ENCODE measurements at regions of chr11 and their contacts with region 1.

Region 1: DNA sequence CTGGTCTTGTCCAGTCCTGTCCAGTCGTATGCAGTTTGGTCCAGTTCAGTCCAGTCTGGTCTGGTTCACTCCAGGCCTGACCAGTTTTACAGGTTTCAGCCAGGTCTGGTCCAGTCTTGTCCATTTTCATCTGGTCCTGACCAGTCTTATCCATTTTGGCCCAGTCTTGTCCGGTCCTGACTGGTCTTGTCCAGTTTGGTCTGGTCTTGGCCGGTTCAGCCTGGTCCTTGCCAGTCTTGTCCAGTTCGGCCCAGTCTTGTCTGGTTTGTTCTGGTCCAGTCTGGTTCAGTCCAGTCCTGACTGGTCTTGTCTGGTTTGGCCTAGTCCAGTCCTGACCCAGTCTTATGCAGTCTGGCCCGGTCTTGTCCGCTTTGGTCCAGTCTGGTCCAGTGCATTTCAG is 380.2 kb downstream of the OR4C45 start:
- DNase-seq: no peak
- ATAC-seq: no peak
- H3K4me3 ChIP-seq: no peak overlapping the region
- H3K27ac ChIP-seq: no peak overlapping the region
- H3K4me1 ChIP-seq: no peaks in the 10 kb centered on the region
- H3K27me3 ChIP-seq: no peaks in the 10 kb centered on the region
- CTCF ChIP-seq: no peak
- EP300 ChIP-seq: no peak
- POLR2A ChIP-seq: no peak
- RAD21 ChIP-seq: no peak

Region 2: GRCh38 chr11:49952091-49952490 is 460.7 kb before region 1 on chr11 and contains the start of gene OR4C13:
- CTCF ChIA-PET with region 1: no interaction called
- POLR2A ChIA-PET with region 1: no interaction called
- RAD21 ChIA-PET with region 1: no interaction called
- SMC1A ChIA-PET with region 1: no interaction called
- in situ Hi-C with region 1: no loop called
- intact Hi-C with region 1: no loop called
- DNase-seq: no peak
- ATAC-seq: no peak
- H3K4me3 ChIP-seq: no peak within 1 kb of the TSS
- H3K27ac ChIP-seq: no peak within 1 kb of the TSS
- H3K4me1 ChIP-seq: no peaks in the 10 kb centered on the region
- H3K27me3 ChIP-seq: no peaks in the 10 kb centered on the region
- CTCF ChIP-seq: no peak
- EP300 ChIP-seq: no peak
- POLR2A ChIP-seq: no peak
- RAD21 ChIP-seq: no peak
- polyA plus RNA-seq, gene OR4C13: not detected

Region 3: DNA sequence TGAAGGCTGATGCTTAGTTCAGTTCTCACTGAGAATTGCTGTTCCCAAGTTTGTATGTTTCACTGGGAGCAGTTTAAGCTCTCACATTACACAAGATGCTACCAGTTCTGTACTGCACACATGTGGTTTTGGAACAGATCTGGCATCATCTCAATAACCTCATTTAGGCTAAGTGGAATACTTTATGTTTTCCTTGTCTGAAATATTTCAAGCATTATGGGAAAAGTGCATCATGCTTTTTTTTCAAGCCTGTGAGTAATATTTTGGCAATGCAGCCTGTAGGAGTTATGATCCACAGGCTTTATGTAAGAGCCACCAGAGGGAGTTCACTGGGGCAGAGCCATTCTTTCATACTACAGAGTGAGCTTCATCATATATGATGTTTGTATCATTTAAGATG is 238.6 kb before region 1 on chr11:
- CTCF ChIA-PET with region 1: no interaction called
- POLR2A ChIA-PET with region 1: no interaction called
- RAD21 ChIA-PET with region 1: no interaction called
- SMC1A ChIA-PET with region 1: no interaction called
- in situ Hi-C with region 1: loop called (anchors 25 kb)
- intact Hi-C with region 1: no loop called
- DNase-seq: no peak
- ATAC-seq: no peak
- H3K4me3 ChIP-seq: no peak overlapping the region
- H3K27ac ChIP-seq: no peak overlapping the region
- H3K4me1 ChIP-seq: no peaks in the 10 kb centered on the region
- H3K27me3 ChIP-seq: no peaks in the 10 kb centered on the region
- CTCF ChIP-seq: no peak
- EP300 ChIP-seq: no peak
- POLR2A ChIP-seq: no peak
- RAD21 ChIP-seq: no peak

Region 4: DNA sequence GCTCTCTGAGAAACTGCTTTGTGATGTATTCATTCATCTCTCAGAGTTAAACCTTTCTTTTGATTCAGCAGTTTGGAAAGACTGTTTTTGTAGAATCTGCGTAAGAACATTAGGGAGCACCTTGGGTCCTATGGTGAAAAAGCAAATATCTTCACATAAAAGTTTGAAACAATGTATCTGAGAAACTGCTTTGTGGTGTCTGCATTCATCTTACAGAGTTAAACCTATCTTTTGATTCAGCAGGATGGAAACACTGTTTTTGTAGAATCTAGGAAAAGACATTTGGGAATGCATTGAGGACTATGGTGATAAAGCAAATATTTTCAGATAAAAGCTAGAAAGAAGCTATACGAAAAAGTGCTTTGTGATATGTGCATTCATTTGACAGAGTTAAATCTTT is 18.8 kb before region 1 on chr11:
- CTCF ChIA-PET with region 1: no interaction called
- POLR2A ChIA-PET with region 1: no interaction called
- RAD21 ChIA-PET with region 1: no interaction called
- SMC1A ChIA-PET with region 1: no interaction called
- in situ Hi-C with region 1: no loop called
- intact Hi-C with region 1: no loop called
- DNase-seq: no peak
- ATAC-seq: no peak
- H3K4me3 ChIP-seq: no peak overlapping the region
- H3K27ac ChIP-seq: no peak overlapping the region
- H3K4me1 ChIP-seq: no peaks in the 10 kb centered on the region
- H3K27me3 ChIP-seq: no peaks in the 10 kb centered on the region
- CTCF ChIP-seq: no peak
- EP300 ChIP-seq: no peak
- POLR2A ChIP-seq: no peak
- RAD21 ChIP-seq: no peak

Measured in GM12878 (cell line).